B cell (primary cell): ENCODE measurements at regions of chr22 and their contacts with region 1.

Region 1: GRCh38 chr22:20116951-20117645 is at the start of gene TRMT2A:
- DNase-seq: peak; percentile 99
- ATAC-seq: peak; percentile 84
- H3K4me3 ChIP-seq: peak within 1 kb of the TSS; percentile 42 to 94 (median 80)
- H3K4me3 Mint-ChIP-seq: peak within 1 kb of the TSS; percentile 93
- H3K27ac ChIP-seq: peak within 1 kb of the TSS; percentile 66 to 85
- H3K27ac Mint-ChIP-seq: peak within 1 kb of the TSS; percentile 94
- H3K4me1 ChIP-seq: peaks cover 19 to 40% of the 10 kb centered on the region in 2 donors
- H3K4me1 Mint-ChIP-seq: peaks cover 29% of the 10 kb centered on the region
- H3K27me3 ChIP-seq: no peaks in the 10 kb centered on the region
- H3K27me3 Mint-ChIP-seq: no peaks in the 10 kb centered on the region
- CTCF ChIP-seq: peak; percentile 30
- total RNA-seq, gene TRMT2A: 88.7 and 95.7 TPM in 2 replicates

Region 2: DNA sequence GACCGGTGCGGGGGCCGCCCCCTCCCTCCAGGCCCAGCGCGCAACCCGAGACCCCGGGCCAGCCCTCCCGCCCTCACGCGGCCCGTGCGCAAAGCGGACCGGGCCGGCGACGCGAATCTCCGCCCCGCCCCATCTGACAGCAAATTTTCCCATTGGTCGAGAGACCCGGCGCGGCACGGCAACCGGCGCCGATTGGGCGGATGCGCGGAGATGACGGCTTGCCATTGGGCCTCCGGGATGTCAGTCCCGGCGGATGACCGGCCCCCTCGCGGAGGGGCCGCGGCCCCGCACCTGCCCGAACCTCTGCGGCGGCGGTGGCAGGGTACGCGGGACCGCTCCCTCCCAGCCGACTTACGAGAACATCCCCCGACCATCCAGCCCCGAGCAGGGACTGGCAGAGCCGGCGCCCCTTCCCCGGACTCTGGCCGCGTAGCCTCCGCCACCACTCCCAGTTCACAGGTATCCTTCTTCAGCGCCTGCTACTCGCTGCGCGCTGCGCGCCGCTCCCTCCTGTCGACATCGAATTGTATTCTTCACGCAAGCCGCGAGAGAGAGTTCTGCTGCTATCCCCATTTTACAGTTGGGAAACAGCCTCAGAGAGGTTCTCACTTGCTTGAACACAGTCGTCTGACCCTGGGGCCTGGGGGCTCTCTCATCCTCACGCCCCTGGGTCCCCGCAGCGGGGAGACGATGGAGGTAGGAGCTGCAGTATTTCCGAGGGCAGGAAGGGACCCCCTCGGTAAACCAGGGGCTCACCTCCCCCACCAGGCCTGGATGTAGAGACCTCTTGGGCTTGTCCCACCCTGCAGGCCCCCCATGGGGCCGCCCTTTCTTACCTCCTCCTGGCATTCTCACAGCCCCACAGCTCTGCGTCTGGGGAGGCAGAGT is 100.1 kb before region 1 on chr22 and contains the start of gene ARVCF:
- CTCF ChIA-PET with region 1: no interaction called
- POLR2A ChIA-PET with region 1: interaction called, 5 read pairs
- intact Hi-C with region 1: loop called (anchors 1 kb)
- DNase-seq: peak; percentile 97
- ATAC-seq: peak; percentile 69
- H3K4me3 ChIP-seq: peak within 1 kb of the TSS; percentile 22 to 79 (median 76)
- H3K4me3 Mint-ChIP-seq: peak within 1 kb of the TSS; percentile 91
- H3K27ac ChIP-seq: no peak within 1 kb of the TSS
- H3K27ac Mint-ChIP-seq: peak within 1 kb of the TSS; percentile 61
- H3K4me1 ChIP-seq: peaks cover 18 to 22% of the 10 kb centered on the region in 2 donors
- H3K4me1 Mint-ChIP-seq: peaks cover 25% of the 10 kb centered on the region
- H3K27me3 ChIP-seq: peaks cover 0 to 25% (median 4%) of the 10 kb centered on the region in 4 experiments
- H3K27me3 Mint-ChIP-seq: no peaks in the 10 kb centered on the region
- CTCF ChIP-seq: peak; percentile 39
- total RNA-seq, gene ARVCF: 6.7 and 8.4 TPM in 2 replicates

Region 3: GRCh38 chr22:20130739-20131596 is 13.9 kb after region 1 on chr22:
- CTCF ChIA-PET with region 1: interaction called, 5 read pairs
- POLR2A ChIA-PET with region 1: interaction called, 3 read pairs
- intact Hi-C with region 1: loop called (anchors 1 kb)
- DNase-seq: peak; percentile 86
- ATAC-seq: peak; percentile 85
- H3K4me3 ChIP-seq: peak overlapping the region; percentile 6 to 97 (median 87)
- H3K4me3 Mint-ChIP-seq: peak overlapping the region; percentile 70
- H3K27ac ChIP-seq: peak overlapping the region; percentile 54 to 79
- H3K27ac Mint-ChIP-seq: peak overlapping the region; percentile 80
- H3K4me1 ChIP-seq: peaks cover 14 to 37% of the 10 kb centered on the region in 2 donors
- H3K4me1 Mint-ChIP-seq: peaks cover 24% of the 10 kb centered on the region
- H3K27me3 ChIP-seq: no peaks in the 10 kb centered on the region
- H3K27me3 Mint-ChIP-seq: no peaks in the 10 kb centered on the region
- CTCF ChIP-seq: no peak

Region 4: DNA sequence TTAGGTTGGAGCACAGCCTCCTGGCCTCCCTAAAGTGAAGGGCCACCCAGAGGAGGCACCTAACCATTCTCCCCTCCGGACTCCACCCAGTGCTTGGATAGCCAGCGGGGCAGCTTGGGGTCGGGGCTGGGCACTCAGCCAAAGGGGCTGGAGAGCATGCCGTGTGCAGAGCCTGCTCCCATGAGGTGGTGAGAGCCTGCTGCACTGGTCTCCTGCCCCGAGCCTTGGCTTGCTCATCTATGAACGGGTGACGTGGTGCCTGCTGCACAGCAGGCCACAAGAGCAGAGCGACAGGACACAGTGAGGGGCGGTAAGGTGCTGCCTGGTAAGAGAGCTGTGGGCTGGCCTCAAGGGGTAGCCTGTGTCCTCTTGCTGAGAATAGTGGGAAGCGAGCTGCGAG is 47.8 kb after region 1 on chr22:
- CTCF ChIA-PET with region 1: no interaction called
- POLR2A ChIA-PET with region 1: no interaction called
- intact Hi-C with region 1: no loop called
- DNase-seq: no peak
- ATAC-seq: no peak
- H3K4me3 ChIP-seq: no peak overlapping the region
- H3K4me3 Mint-ChIP-seq: no peak overlapping the region
- H3K27ac ChIP-seq: no peak overlapping the region
- H3K27ac Mint-ChIP-seq: no peak overlapping the region
- H3K4me1 ChIP-seq: no peaks in the 10 kb centered on the region
- H3K4me1 Mint-ChIP-seq: no peaks in the 10 kb centered on the region
- H3K27me3 ChIP-seq: no peaks in the 10 kb centered on the region
- H3K27me3 Mint-ChIP-seq: no peaks in the 10 kb centered on the region
- CTCF ChIP-seq: no peak

Region 5: DNA sequence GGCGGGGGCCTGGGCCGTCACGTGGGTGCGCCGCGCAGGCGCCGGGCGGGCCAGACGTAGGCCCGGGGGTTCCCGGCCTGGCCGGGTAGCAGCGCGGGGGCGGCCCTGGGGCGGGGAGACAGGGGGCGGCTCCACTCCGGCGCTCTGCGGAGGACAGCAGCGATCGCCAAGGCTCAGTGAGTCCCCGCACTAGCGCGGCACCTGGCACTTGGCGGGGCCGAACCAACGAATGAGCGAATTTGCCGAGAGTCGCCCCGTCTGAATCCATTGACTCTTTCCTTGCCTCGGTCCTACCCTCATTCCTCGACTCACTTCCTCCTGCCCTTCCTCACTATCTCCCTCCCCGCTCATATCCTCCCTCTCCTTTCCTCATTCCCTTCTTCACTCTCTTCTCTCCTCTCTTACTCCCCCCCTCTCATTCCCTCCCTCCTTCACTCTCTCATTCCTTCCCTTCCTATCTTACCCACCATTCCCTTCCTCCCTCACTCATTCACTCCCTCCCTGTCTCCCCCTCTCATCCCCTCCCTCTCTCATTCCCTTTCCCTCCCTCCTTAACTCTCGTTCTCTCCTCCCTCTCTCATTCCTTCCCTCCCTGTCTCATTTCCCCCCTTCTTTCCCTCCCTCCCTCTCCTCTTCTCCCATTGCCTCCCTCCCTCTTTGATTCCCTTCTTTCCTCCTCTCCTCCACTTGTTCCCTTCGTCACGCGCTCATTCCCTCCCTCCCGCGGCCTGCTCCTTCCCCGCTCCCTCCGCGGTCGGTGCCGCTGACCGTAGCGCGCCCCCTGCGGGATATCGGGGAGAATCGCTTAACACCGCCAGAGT is 379.0 kb after region 1 on chr22:
- CTCF ChIA-PET with region 1: no interaction called
- POLR2A ChIA-PET with region 1: no interaction called
- intact Hi-C with region 1: loop called (anchors 1 kb)
- DNase-seq: peak; percentile 96
- ATAC-seq: peak; percentile 96
- H3K4me3 ChIP-seq: peak overlapping the region; percentile 75 to 85 (median 76)
- H3K4me3 Mint-ChIP-seq: peak overlapping the region; percentile 97
- H3K27ac ChIP-seq: peak overlapping the region; percentile 96 to 98
- H3K27ac Mint-ChIP-seq: peak overlapping the region; percentile 95
- H3K4me1 ChIP-seq: peaks cover 10 to 23% of the 10 kb centered on the region in 2 donors
- H3K4me1 Mint-ChIP-seq: peaks cover 26% of the 10 kb centered on the region
- H3K27me3 ChIP-seq: no peaks in the 10 kb centered on the region
- H3K27me3 Mint-ChIP-seq: no peaks in the 10 kb centered on the region
- CTCF ChIP-seq: peak; percentile 91

Region 6: DNA sequence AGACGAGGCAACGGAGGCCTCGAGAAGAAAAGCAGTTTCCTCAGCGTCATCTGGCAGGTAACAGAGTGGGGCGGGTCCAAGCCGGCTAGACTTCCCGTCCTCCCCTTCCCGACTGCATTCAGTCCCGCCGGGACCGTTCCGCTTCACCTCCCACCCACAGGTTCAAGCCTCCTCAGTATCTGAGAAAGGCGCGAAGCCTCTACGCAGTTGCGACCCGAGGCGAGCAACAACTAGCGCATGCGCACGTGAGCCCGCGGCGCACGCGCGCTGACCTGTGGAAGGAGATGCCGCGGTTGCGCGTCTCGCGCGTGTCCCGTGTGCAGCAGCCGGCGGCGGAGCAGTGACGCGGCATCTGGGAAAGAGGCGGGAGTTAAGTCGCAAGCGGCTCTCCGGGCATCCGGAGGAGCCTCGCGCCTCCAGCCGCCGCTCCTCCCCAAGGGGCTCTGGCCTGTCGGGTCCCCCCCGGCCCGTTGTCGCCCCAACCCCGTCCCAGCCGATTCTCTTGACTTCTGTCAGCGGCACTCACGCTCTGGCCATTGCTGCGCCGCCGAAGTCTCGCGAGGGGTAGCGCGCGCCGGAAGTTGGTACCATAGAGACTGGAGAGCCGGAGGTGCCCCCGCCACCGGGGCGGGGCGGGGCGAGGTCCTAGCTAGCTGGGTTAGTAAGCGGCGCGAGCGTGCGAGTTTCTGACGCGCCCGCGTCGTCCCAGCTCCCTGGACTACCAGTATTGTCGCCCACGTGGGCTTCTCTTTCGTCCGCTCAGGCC is 884.6 kb after region 1 on chr22 and contains the start of gene THAP7:
- CTCF ChIA-PET with region 1: no interaction called
- POLR2A ChIA-PET with region 1: no interaction called
- intact Hi-C with region 1: loop called (anchors 5 kb)
- DNase-seq: peak; percentile 99
- ATAC-seq: peak; percentile 88
- H3K4me3 ChIP-seq: peak within 1 kb of the TSS; percentile 66 to 99 (median 88)
- H3K4me3 Mint-ChIP-seq: peak within 1 kb of the TSS; percentile 95
- H3K27ac ChIP-seq: peak within 1 kb of the TSS; percentile 91 to 96
- H3K27ac Mint-ChIP-seq: peak within 1 kb of the TSS; percentile 99
- H3K4me1 ChIP-seq: peaks cover 24 to 36% of the 10 kb centered on the region in 2 donors
- H3K4me1 Mint-ChIP-seq: peaks cover 32% of the 10 kb centered on the region
- H3K27me3 ChIP-seq: no peaks in the 10 kb centered on the region
- H3K27me3 Mint-ChIP-seq: no peaks in the 10 kb centered on the region
- CTCF ChIP-seq: no peak
- total RNA-seq, gene THAP7: 37.7 and 43.1 TPM in 2 replicates